Naive thymus-derived CD4-positive, alpha-beta T cell (primary cell): ENCODE measurements at regions of chr9 and their contacts with region 1.

Region 1: GRCh38 chr9:127943731-127944144 is 6.1 kb upstream of the DPM2 start:
- DNase-seq: peak; percentile 57 to 79 (median 72)
- ATAC-seq: peak; percentile 90
- H3K4me3 ChIP-seq: no peak overlapping the region
- H3K4me3 Mint-ChIP-seq: peak overlapping the region in 5 of 10 donors; percentile 7 to 47 (median 25)
- H3K27ac ChIP-seq: peak overlapping the region; percentile 22
- H3K27ac Mint-ChIP-seq: peak overlapping the region; percentile 70 to 97 (median 88)
- H3K4me1 ChIP-seq: peaks cover 4 to 12% of the 10 kb centered on the region in 2 donors
- H3K4me1 Mint-ChIP-seq: peaks cover 21 to 58% (median 42%) of the 10 kb centered on the region in 7 donors
- H3K27me3 ChIP-seq: no peaks in the 10 kb centered on the region
- H3K27me3 Mint-ChIP-seq: no peaks in the 10 kb centered on the region

Region 2: GRCh38 chr9:127970401-127971313 is 26.9 kb after region 1 on chr9:
- CTCF ChIA-PET with region 1: interaction called, 9 read pairs
- POLR2A ChIA-PET with region 1: interaction called, 1,719 read pairs
- intact Hi-C with region 1: loop called in 1 of 2 experiments (anchors 2 kb)
- DNase-seq: peak in 8 of 9 donors; percentile 68 to 84 (median 80)
- ATAC-seq: peak; percentile 72
- H3K4me3 ChIP-seq: peak overlapping the region; percentile 93
- H3K4me3 Mint-ChIP-seq: peak overlapping the region; percentile 89 to 99 (median 96)
- H3K27ac ChIP-seq: peak overlapping the region; percentile 84
- H3K27ac Mint-ChIP-seq: peak overlapping the region; percentile 90 to 99 (median 97)
- H3K4me1 ChIP-seq: peaks cover 61 to 93% of the 10 kb centered on the region in 2 donors
- H3K4me1 Mint-ChIP-seq: peaks cover 69 to 95% (median 83%) of the 10 kb centered on the region in 7 donors
- H3K27me3 ChIP-seq: no peaks in the 10 kb centered on the region
- H3K27me3 Mint-ChIP-seq: no peaks in the 10 kb centered on the region

Region 3: DNA sequence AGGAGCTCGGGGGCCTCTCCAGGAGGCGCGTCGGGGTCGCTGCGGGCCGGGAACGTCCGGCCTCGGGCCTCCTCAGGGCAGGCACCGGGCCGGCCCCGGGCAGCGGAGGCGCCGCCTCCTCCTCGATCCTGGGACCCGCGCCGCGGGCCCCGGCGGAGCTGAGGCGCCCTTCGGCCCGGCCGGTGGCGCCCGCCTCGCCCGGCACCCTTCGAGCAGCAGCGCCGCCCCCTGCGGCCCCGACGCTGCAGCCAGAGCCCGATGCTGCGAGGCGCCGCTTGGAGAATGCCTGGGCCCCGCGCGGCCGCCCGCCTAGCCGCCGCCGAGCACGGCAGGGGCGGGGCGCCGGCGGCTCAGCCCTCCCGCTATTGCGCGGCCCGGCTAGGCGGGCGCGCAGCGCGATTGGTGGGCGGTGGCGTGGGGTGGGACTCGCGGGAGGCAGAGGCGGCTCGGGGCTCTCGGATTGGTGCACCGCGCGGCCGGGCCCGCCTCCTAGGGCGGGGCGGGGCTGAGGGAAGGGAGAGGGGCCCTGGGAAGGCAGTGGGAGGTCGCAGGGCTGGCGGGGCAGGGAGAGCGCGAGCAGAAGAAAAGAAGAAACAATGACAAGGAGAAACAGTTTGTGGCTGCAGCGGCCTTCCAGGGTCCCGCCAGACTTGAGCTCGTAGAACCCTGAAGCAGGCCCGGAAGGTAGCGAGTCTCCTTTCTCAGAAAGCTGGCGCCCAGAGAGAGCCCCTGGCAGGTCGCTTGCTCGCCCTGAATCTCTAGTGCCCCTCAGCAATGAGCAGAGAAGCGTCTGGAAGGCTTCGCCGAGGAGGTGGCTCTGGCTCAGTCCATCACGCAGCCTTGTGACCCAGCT is 37.2 kb after region 1 on chr9 and contains the start of gene EEIG1:
- CTCF ChIA-PET with region 1: interaction called, 13 read pairs
- POLR2A ChIA-PET with region 1: interaction called, 1,719 read pairs
- intact Hi-C with region 1: loop called (anchors 2 to 5 kb)
- DNase-seq: peak; percentile 95 to 100 (median 99)
- ATAC-seq: peak; percentile 96
- H3K4me3 ChIP-seq: peak within 1 kb of the TSS; percentile 93
- H3K4me3 Mint-ChIP-seq: peak within 1 kb of the TSS; percentile 93 to 99 (median 98)
- H3K27ac ChIP-seq: peak within 1 kb of the TSS; percentile 84
- H3K27ac Mint-ChIP-seq: peak within 1 kb of the TSS; percentile 92 to 100 (median 98)
- H3K4me1 ChIP-seq: peaks cover 25 to 38% of the 10 kb centered on the region in 2 donors
- H3K4me1 Mint-ChIP-seq: peaks cover 35 to 47% (median 42%) of the 10 kb centered on the region in 7 donors
- H3K27me3 ChIP-seq: no peaks in the 10 kb centered on the region
- H3K27me3 Mint-ChIP-seq: no peaks in the 10 kb centered on the region
- total RNA-seq, gene EEIG1: 252 to 664 (median 347) TPM

Region 4: GRCh38 chr9:128103589-128103962 is 159.8 kb after region 1 on chr9:
- CTCF ChIA-PET with region 1: interaction called, 3 read pairs
- POLR2A ChIA-PET with region 1: no interaction called
- intact Hi-C with region 1: loop called in 1 of 2 experiments (anchors 1 kb)
- DNase-seq: peak in 7 of 9 donors; percentile 27 to 52 (median 50)
- ATAC-seq: peak; percentile 77
- H3K4me3 ChIP-seq: no peak overlapping the region
- H3K4me3 Mint-ChIP-seq: peak overlapping the region in 7 of 10 donors; percentile 5 to 56 (median 36)
- H3K27ac ChIP-seq: peak overlapping the region; percentile 3
- H3K27ac Mint-ChIP-seq: peak overlapping the region in 8 of 9 donors; percentile 60 to 89 (median 74)
- H3K4me1 ChIP-seq: peaks cover 6 to 41% of the 10 kb centered on the region in 2 donors
- H3K4me1 Mint-ChIP-seq: peaks cover 36 to 68% (median 46%) of the 10 kb centered on the region in 7 donors
- H3K27me3 ChIP-seq: no peaks in the 10 kb centered on the region
- H3K27me3 Mint-ChIP-seq: no peaks in the 10 kb centered on the region

Region 5: DNA sequence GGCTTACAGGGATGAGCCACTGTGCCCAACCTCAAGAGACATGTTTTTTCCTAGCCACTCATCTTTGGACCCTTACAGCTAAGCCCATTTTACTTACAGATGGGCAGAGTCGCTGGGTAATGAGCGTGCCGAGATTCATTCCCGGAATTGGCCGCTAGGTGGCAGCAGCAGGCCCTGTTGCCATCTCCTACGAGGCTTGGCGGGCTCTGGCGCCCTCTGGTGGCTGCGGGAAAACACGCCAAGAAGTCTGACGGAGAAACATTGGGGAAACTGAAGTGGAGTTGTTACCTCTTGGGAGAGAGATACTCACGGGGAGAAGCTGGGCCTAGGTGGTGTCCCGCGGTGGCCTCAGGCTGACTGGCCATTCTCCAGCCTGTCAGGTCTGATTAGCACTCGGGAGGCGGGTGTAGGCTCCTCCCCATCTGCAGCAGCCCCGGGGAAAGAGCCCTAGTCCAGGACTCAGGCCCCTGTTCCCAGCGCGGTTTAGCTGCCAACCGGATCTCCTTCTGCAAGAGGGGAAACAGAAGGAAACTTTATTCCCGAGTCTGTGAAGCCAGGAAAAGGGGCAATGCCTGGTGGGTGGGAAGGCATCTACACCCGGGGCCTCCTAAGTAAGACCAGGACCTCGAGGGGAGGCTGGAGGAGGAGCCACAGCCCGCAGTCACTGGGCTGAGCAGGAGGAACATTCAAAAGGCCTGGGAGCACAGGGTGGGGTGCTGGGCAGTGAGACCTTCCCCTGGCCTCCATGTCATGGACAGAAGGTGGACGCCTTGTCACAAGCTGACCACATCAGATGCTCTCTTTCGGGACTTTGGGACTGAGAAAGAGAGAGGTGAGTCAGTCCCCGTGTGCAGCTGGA is 174.1 kb after region 1 on chr9:
- CTCF ChIA-PET with region 1: no interaction called
- POLR2A ChIA-PET with region 1: no interaction called
- intact Hi-C with region 1: loop called (anchors 2 kb)
- DNase-seq: peak; percentile 82 to 99 (median 92)
- ATAC-seq: peak; percentile 97
- H3K4me3 ChIP-seq: no peak overlapping the region
- H3K4me3 Mint-ChIP-seq: peak overlapping the region in 4 of 10 donors; percentile 3 to 59 (median 36)
- H3K27ac ChIP-seq: no peak overlapping the region
- H3K27ac Mint-ChIP-seq: peak overlapping the region in 8 of 9 donors; percentile 11 to 88 (median 60)
- H3K4me1 ChIP-seq: peaks cover 0 to 7% of the 10 kb centered on the region in 2 donors
- H3K4me1 Mint-ChIP-seq: peaks cover 6 to 13% (median 7%) of the 10 kb centered on the region in 7 donors
- H3K27me3 ChIP-seq: no peaks in the 10 kb centered on the region
- H3K27me3 Mint-ChIP-seq: no peaks in the 10 kb centered on the region